ENCODE measurements at regions of chr11 and their contacts with region 1.

Region 1: GRCh38 chr11:121591405-121592033 is 138.8 kb upstream of the SORL1-AS1 start:
- DNase-seq: peak; percentile 64
- ATAC-seq: peak; percentile 86
- H3K4me3 ChIP-seq: no peak overlapping the region
- H3K27ac ChIP-seq: no peak overlapping the region
- H3K4me1 ChIP-seq: peaks cover 5 to 15% of the 10 kb centered on the region in 2 experiments; a peak in 3 of 4 replicates
- H3K27me3 ChIP-seq: no peaks in the 10 kb centered on the region
- CTCF ChIP-seq: peak; percentile 78 to 93 (median 88)
- POLR2A ChIP-seq: no peak
- RAD21 ChIP-seq: peak; percentile 97

Region 2: DNA sequence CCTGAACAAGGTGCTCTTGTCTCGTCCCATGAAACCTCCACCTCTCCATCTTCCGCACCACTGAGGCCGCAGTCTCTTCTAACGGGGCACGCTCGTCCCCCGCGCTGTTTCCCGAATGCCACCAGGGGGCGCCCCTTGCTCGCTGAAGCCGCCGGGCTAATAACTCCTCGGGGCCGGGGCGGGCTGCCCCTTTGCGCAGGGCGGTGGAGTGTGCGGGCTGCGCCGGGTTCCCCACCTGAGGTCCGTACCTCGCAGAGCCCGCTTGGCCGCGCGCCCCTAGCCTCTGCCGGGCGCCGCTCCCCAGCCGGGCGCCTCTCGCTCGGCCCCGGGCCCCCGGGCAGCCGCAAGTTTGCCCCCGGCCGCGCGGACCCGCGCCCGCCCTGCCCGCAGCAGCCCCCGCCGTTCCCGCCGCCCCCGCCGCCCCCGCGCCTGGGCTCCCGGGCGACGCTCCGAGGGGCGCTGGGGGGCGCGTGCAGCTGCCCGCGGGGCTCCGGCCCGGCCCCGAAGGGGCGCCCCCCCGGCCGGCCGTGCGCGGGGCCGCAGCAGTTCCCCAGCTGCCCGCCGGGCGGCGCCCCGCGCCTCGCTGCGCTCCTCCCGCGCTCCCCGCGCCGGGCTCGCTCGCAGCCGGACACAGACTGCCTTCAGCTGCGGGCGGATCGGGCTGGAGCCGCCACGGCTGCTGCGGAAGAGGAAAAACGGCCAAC is 1080.3 kb before region 1 on chr11 and contains the start of gene GRIK4:
- CTCF ChIA-PET with region 1: no interaction called
- POLR2A ChIA-PET with region 1: no interaction called
- RAD21 ChIA-PET with region 1: no interaction called
- intact Hi-C with region 1: loop called (anchors 2 kb)
- DNase-seq: peak; percentile 39
- ATAC-seq: peak; percentile 93
- H3K4me3 ChIP-seq: peak within 1 kb of the TSS; percentile 25 to 49
- H3K27ac ChIP-seq: peak within 1 kb of the TSS; percentile 14; the same call in 1 of the 2 replicates
- H3K4me1 ChIP-seq: no peaks in the 10 kb centered on the region; a peak in 1 of 4 replicates
- H3K27me3 ChIP-seq: no peaks in the 10 kb centered on the region
- CTCF ChIP-seq: peak; percentile 93 to 94 (median 93)
- POLR2A ChIP-seq: no peak
- RAD21 ChIP-seq: peak; percentile 99
- total RNA-seq, gene GRIK4: 0.52 TPM

Region 3: GRCh38 chr11:121112498-121113455 is 478.7 kb before region 1 on chr11:
- CTCF ChIA-PET with region 1: no interaction called
- POLR2A ChIA-PET with region 1: no interaction called
- RAD21 ChIA-PET with region 1: no interaction called
- intact Hi-C with region 1: loop called (anchors 10 kb)
- DNase-seq: peak; percentile 35
- ATAC-seq: peak; percentile 98
- H3K4me3 ChIP-seq: no peak overlapping the region
- H3K27ac ChIP-seq: no peak overlapping the region
- H3K4me1 ChIP-seq: 0 out of 4 replicates have a peak, but pooled peaks cover 0 to 3% of the 10 kb centered on the region in 2 experiments
- H3K27me3 ChIP-seq: peaks cover 8% of the 10 kb centered on the region; the same call in 1 of the 2 replicates
- CTCF ChIP-seq: peak; percentile 43 to 70 (median 67)
- POLR2A ChIP-seq: no peak
- RAD21 ChIP-seq: peak; percentile 81

Region 4: DNA sequence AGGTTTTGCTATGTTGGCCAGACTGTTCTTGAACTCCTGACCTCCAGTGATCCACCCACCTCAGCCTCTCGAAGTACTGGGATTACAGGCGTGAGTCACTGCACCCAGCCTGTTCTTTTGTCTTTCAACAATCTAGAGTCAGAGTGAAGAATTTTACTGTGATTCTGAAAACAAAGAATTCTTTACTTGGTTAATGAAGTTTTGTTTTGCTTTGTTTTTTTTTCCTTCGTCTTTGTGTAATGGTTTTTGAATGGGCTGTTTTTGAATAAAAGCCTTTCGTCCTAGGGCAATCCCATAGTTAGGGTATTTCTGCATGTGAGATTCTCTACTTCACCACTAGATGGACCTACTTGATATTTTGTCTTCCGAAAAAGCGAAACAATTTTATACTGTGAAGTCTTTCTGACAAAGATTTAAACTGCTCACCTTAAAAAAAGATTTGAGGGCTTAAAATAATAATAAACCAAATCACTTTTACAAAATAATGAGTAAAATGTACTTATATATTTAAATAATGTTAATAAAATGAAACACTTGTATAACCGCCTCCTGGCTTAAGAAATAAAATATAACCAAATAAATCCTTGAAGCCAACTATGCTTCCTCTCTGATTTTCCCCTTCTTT is 342.4 kb before region 1 on chr11:
- CTCF ChIA-PET with region 1: interaction called, 6 read pairs
- POLR2A ChIA-PET with region 1: no interaction called
- RAD21 ChIA-PET with region 1: no interaction called
- intact Hi-C with region 1: loop called (anchors 1 kb)
- DNase-seq: peak; percentile 24
- ATAC-seq: peak; percentile 84
- H3K4me3 ChIP-seq: peak overlapping the region in 1 of 2 experiments; percentile 29; a peak in 1 of 4 replicates
- H3K27ac ChIP-seq: no peak overlapping the region
- H3K4me1 ChIP-seq: peaks cover 0 to 5% of the 10 kb centered on the region in 2 experiments; a peak in 2 of 4 replicates
- H3K27me3 ChIP-seq: no peaks in the 10 kb centered on the region
- CTCF ChIP-seq: peak; percentile 59 to 73 (median 71); a peak in 5 of 6 replicates
- POLR2A ChIP-seq: no peak
- RAD21 ChIP-seq: peak; percentile 53

Region 5: DNA sequence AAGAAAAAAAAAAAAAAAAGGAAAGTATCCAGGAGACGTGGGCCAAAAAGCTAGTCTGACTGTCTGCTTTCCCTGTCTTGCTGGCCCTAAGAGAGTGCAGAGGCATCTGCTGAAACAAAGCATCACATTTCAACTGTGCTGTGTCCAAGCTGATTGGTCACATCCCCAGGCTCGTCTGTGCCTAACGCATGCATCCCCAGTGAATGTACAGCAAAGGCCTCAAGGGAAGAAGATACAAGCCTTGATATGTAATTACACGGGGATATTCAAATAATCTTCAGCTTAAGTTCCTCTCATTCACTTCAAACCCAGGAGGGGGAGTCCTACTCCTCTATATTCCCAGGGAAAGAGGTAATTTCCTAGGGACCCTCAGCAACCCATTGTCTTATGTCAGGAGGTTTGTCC is 144.8 kb before region 1 on chr11:
- CTCF ChIA-PET with region 1: interaction called, 10 read pairs
- POLR2A ChIA-PET with region 1: no interaction called
- RAD21 ChIA-PET with region 1: interaction called in 1 of 2 experiments, 4 read pairs
- intact Hi-C with region 1: loop called (anchors 1 kb)
- DNase-seq: no peak
- ATAC-seq: peak; percentile 49
- H3K4me3 ChIP-seq: no peak overlapping the region
- H3K27ac ChIP-seq: no peak overlapping the region
- H3K4me1 ChIP-seq: peaks cover 4 to 6% of the 10 kb centered on the region in 2 experiments; a peak in 2 of 4 replicates
- H3K27me3 ChIP-seq: no peaks in the 10 kb centered on the region
- CTCF ChIP-seq: peak; percentile 12 to 58 (median 41); a peak in 4 of 6 replicates
- POLR2A ChIP-seq: no peak
- RAD21 ChIP-seq: peak; percentile 75

Region 6: GRCh38 chr11:121655537-121656327 is 64.2 kb after region 1 on chr11:
- CTCF ChIA-PET with region 1: no interaction called
- POLR2A ChIA-PET with region 1: no interaction called
- RAD21 ChIA-PET with region 1: no interaction called
- intact Hi-C with region 1: no loop called
- DNase-seq: peak; percentile 60
- ATAC-seq: peak; percentile 92
- H3K4me3 ChIP-seq: peak overlapping the region; percentile 28 to 51
- H3K27ac ChIP-seq: peak overlapping the region; percentile 62
- H3K4me1 ChIP-seq: peaks cover 19 to 34% of the 10 kb centered on the region in 2 experiments
- H3K27me3 ChIP-seq: no peaks in the 10 kb centered on the region
- CTCF ChIP-seq: peak; percentile 83 to 90 (median 84)
- POLR2A ChIP-seq: no peak
- RAD21 ChIP-seq: peak; percentile 99

Region 7: GRCh38 chr11:122505304-122506006 is 913.9 kb after region 1 on chr11:
- CTCF ChIA-PET with region 1: interaction called, 8 read pairs
- POLR2A ChIA-PET with region 1: no interaction called
- RAD21 ChIA-PET with region 1: no interaction called
- intact Hi-C with region 1: loop called (anchors 2 kb)
- DNase-seq: peak; percentile 58
- ATAC-seq: peak; percentile 99
- H3K4me3 ChIP-seq: no peak overlapping the region
- H3K27ac ChIP-seq: no peak overlapping the region
- H3K4me1 ChIP-seq: peaks cover 0 to 3% of the 10 kb centered on the region in 2 experiments; a peak in 3 of 4 replicates
- H3K27me3 ChIP-seq: no peaks in the 10 kb centered on the region
- CTCF ChIP-seq: peak; percentile 80 to 91 (median 91); a peak in 5 of 6 replicates
- POLR2A ChIP-seq: no peak
- RAD21 ChIP-seq: peak; percentile 98